HCT116 (cell line): ENCODE measurements at regions of chr3 and their contacts with region 1.

Region 1: DNA sequence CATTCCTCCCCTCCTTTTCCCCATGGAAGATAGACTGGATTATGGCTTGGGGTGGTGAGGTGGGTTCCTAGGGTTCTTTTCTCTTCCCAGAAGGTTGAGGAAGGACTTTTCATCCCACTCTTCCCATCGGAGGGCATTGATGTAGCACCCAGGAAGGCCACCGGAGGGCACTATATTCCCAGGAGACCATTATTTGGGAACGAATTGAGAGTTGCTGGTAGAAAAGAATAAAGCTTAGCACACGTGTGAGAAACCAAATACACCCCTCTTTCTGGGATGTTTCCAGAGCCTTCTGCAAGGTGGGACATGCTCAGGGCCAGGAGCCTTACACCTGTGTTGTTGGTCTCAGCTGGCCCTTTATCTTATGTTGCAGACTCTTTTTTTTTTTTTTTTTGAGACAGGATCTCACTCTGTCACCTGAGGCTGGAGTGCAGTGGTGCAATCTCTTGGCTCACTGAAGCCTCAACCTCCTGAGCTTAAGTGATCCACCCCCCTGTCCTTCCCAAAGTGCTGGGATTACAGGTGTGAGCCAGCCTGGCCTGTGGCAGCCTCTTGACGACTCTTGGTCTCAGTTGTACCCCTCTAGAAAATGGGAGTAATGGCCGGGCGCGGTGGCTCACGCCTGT is 6.3 kb upstream of the CDC25A start:
- DNase-seq: peak; percentile 48
- ATAC-seq: peak; percentile 90
- H3K4me3 ChIP-seq: no peak overlapping the region
- H3K27ac ChIP-seq: no peak overlapping the region
- H3K4me1 ChIP-seq: peaks cover 5 to 16% of the 10 kb centered on the region in 2 experiments; a peak in 3 of 4 replicates
- H3K27me3 ChIP-seq: no peaks in the 10 kb centered on the region
- CTCF ChIP-seq: peak; percentile 81 to 94 (median 90); a peak in 5 of 6 replicates
- POLR2A ChIP-seq: no peak
- RAD21 ChIP-seq: peak; percentile 87

Region 2: GRCh38 chr3:48232734-48233133 is 38.2 kb after region 1 on chr3:
- CTCF ChIA-PET with region 1: interaction called, 4 read pairs
- POLR2A ChIA-PET with region 1: no interaction called
- RAD21 ChIA-PET with region 1: no interaction called
- intact Hi-C with region 1: loop called (anchors 1 kb)
- DNase-seq: peak; percentile 74
- ATAC-seq: peak; percentile 100
- H3K4me3 ChIP-seq: peak overlapping the region; percentile 6 to 42
- H3K27ac ChIP-seq: no peak overlapping the region
- H3K4me1 ChIP-seq: peaks cover 0 to 8% of the 10 kb centered on the region in 2 experiments; a peak in 2 of 4 replicates
- H3K27me3 ChIP-seq: no peaks in the 10 kb centered on the region
- CTCF ChIP-seq: peak; percentile 78 to 86 (median 82)
- POLR2A ChIP-seq: peak; percentile 50
- RAD21 ChIP-seq: peak; percentile 76

Region 3: DNA sequence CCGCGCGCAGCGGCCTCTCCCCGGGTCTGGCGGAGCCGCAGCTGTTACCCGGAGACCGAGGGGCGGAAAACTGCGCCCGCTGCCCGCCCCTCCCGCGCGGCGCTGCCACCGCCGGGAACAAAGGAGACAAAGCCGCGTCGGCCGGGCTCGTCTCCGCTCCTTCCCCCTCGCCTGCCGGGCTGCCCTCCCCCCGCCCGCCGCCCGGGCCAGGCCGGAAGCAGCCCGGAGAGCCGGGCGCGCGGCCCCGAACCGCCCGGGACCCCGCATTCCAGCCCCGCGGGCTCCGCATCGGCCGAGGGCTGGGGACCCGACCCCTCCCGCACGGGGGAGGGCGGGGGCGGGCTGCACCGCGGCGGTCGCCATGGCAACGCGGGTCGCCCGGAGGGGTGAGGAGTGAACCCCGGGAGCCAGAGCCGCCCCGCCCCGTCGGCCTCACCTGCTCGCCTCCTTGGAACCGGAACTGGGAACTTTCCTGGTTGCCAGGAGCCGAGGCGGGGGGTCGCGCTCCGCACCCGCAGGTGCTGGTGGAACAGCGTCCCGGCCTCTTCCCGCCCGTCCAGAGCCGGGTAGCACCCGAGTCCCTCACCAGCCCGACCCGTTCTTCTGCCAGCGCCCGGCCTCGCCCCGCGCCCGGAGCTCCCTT is 234.9 kb after region 1 on chr3:
- CTCF ChIA-PET with region 1: interaction called, 4 read pairs
- POLR2A ChIA-PET with region 1: no interaction called
- RAD21 ChIA-PET with region 1: no interaction called
- intact Hi-C with region 1: loop called (anchors 1 kb)
- DNase-seq: no peak
- ATAC-seq: peak; percentile 58
- H3K4me3 ChIP-seq: peak overlapping the region; percentile 58 to 70
- H3K27ac ChIP-seq: peak overlapping the region; percentile 81
- H3K4me1 ChIP-seq: peaks cover 44 to 59% of the 10 kb centered on the region in 2 experiments
- H3K27me3 ChIP-seq: no peaks in the 10 kb centered on the region
- CTCF ChIP-seq: no peak
- POLR2A ChIP-seq: no peak
- RAD21 ChIP-seq: no peak